MCF 10A (cell line): ENCODE measurements at regions of chr11 and their contacts with region 1.

Region 1: GRCh38 chr11:120682866-120683265 is 171.3 kb downstream of the GRIK4 start:
- DNase-seq: no peak
- H3K4me3 Mint-ChIP-seq: no peak overlapping the region
- H3K27ac Mint-ChIP-seq: no peak overlapping the region
- H3K4me1 Mint-ChIP-seq: no peaks in the 10 kb centered on the region
- H3K27me3 Mint-ChIP-seq: peaks cover 47% of the 10 kb centered on the region
- CTCF ChIP-seq: no peak

Region 2: DNA sequence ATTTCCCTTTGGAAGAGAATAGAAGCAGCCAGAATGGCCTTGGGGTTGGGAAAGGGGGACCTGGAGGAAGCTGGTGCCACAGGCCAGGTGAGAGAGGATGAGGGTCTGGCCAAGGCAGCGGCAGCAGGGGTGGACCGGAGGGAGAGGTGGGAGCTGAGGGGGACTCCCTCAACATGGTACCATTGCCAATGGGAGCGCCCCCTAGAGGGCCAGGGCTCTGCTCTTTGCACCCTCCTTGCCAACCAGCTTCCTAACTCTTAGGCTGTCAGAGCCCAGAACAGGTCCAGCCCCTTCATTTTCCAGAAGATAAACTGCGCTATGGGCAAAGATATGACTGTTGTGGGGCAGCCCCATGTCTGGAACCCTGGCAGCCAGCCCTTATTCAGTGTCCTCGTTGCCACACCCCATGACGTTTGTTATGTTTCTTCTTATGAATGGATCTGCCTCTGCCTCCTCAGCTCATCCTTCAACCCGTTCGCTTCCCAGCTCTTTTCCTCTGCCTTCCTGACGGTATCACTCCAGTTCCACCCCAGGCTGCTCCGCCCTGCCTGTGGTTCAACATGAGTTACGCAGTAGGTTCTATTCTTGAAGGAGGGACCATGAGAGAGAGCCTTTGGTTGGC is 13.8 kb after region 1 on chr11:
- CTCF ChIA-PET with region 1: interaction called, 25 read pairs
- POLR2A ChIA-PET with region 1: no interaction called
- intact Hi-C with region 1: no loop called
- DNase-seq: no peak
- H3K4me3 Mint-ChIP-seq: no peak overlapping the region
- H3K27ac Mint-ChIP-seq: no peak overlapping the region
- H3K4me1 Mint-ChIP-seq: no peaks in the 10 kb centered on the region
- H3K27me3 Mint-ChIP-seq: peaks cover 39% of the 10 kb centered on the region
- CTCF ChIP-seq: peak; percentile 31

Region 3: GRCh38 chr11:120952461-120953434 is 269.9 kb after region 1 on chr11:
- CTCF ChIA-PET with region 1: interaction called, 11 read pairs
- POLR2A ChIA-PET with region 1: no interaction called
- intact Hi-C with region 1: loop called (anchors 1 kb)
- DNase-seq: peak; percentile 81
- H3K4me3 Mint-ChIP-seq: peak overlapping the region; percentile 49
- H3K27ac Mint-ChIP-seq: no peak overlapping the region
- H3K4me1 Mint-ChIP-seq: peaks cover 6% of the 10 kb centered on the region
- H3K27me3 Mint-ChIP-seq: peaks cover 54% of the 10 kb centered on the region
- CTCF ChIP-seq: peak; percentile 76

Region 4: DNA sequence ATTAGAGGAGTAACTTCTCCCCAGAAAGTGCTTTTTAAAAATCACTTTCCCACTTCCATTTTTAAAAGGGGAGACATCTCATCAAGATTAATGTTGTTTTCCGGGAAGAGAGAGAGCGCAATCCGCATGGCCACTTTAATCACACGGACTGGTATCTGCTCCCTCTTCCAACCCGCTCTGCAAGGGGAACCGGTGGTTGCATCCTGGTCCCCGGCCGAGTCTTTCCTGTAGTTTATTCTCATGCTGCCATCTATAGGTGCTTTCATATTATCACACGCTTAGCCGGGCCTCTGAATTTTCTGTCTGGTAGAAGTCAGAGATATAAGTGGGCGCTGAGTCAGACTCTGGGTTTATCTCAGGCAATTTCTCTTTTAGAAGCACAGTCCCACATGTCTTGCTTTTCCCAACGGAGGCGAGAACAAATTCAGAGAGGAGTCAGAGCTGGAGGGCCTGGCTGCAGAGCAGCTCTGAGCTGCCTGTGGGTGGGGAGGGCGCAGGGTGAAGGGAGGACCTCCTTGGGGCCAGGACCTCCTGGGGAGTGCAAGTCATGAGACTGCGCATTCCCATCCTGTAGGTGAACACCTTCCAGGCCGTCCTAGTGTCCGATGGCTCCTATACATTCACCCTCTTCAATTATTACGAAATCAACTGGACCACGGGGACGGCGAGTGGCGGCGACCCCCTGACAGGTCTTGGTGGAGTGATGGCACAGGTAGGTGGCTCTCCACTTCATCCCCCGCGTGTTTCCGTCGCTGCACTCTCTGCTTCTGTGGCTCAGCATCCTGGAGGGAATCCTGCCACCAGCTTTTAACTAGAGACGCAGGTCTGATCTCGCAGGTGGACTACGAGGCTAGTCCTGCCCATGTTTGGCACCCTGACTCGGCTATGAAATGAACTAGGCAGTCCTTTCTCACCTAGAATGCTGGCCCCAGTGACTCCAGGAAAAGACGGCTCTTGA is 429.9 kb after region 1 on chr11:
- CTCF ChIA-PET with region 1: interaction called, 3 read pairs
- POLR2A ChIA-PET with region 1: no interaction called
- intact Hi-C with region 1: loop called (anchors 10 kb)
- DNase-seq: peak; percentile 59
- H3K4me3 Mint-ChIP-seq: no peak overlapping the region
- H3K27ac Mint-ChIP-seq: no peak overlapping the region
- H3K4me1 Mint-ChIP-seq: no peaks in the 10 kb centered on the region
- H3K27me3 Mint-ChIP-seq: peaks cover 50% of the 10 kb centered on the region
- CTCF ChIP-seq: peak; percentile 48